Activated CD4-positive, alpha-beta memory T cell treated with anti-CD3 and anti-CD28 coated beads for 36 hours (primary cell): ENCODE measurements at regions of chr12 and their contacts with region 1.

Region 1: GRCh38 chr12:95858479-95859343 is at the start of gene SNRPF:
- DNase-seq: peak; percentile 97
- H3K4me3 Mint-ChIP-seq: no peak within 1 kb of the TSS
- H3K27ac Mint-ChIP-seq: no peak within 1 kb of the TSS
- H3K4me1 Mint-ChIP-seq: peaks cover 38% of the 10 kb centered on the region
- H3K27me3 Mint-ChIP-seq: peaks cover 5% of the 10 kb centered on the region
- total RNA-seq, gene SNRPF: 45.4 to 46.0 TPM

Region 2: DNA sequence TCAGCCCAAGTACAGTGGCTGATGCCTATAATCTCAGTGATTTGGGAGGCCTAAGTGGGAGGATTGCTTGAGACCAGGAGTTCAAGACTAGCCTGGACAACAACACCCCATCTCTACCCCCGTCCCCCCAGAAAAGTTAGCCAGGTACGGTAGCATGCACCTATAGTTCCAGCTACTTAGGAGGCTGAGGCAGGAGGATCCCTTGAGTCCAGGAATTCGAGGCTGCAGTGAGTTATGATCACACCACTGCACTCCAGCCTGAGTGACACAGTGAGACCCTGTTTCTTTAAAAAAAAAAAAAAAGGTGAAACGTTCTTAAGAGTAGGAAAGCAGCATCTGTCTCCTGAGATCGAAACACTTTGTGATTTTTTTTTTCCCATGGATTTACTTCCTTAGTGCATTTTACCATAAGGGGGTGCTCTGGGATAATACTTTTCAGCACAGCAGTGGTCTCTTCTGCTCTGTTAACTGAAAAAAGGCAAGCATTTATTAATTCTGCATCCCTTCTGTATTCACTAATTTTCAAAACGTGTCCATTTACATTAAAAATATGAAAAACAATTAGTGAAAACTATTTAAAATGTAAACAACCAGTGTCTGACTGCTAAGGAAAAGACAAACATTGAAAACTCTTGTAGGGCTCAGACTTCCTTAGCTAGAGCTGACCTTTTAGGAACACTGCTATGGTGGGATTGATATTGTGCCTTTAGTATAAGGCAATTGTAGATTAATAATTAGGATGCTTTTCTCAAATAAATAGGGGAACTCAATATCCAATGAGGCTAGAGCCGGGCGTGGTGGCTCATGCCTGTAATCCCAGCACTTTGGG is 276.3 kb before region 1 on chr12:
- CTCF ChIA-PET with region 1: no interaction called
- POLR2A ChIA-PET with region 1: no interaction called
- intact Hi-C with region 1: no loop called
- DNase-seq: no peak
- H3K4me3 Mint-ChIP-seq: no peak overlapping the region
- H3K27ac Mint-ChIP-seq: no peak overlapping the region
- H3K4me1 Mint-ChIP-seq: no peaks in the 10 kb centered on the region
- H3K27me3 Mint-ChIP-seq: peaks cover 6% of the 10 kb centered on the region

Region 3: GRCh38 chr12:95790033-95790911 is 68.4 kb before region 1 on chr12 and contains the start of gene NTN4:
- CTCF ChIA-PET with region 1: no interaction called
- POLR2A ChIA-PET with region 1: no interaction called
- intact Hi-C with region 1: no loop called
- DNase-seq: peak; percentile 39
- H3K4me3 Mint-ChIP-seq: peak within 1 kb of the TSS; percentile 64
- H3K27ac Mint-ChIP-seq: no peak within 1 kb of the TSS
- H3K4me1 Mint-ChIP-seq: peaks cover 16% of the 10 kb centered on the region
- H3K27me3 Mint-ChIP-seq: peaks cover 51% of the 10 kb centered on the region
- total RNA-seq, gene NTN4: 0.29 TPM in 1 of 2 experiments, not detected in the other

Region 4: GRCh38 chr12:96035278-96036236 is 176.8 kb after region 1 on chr12 and contains the start of gene LTA4H:
- CTCF ChIA-PET with region 1: no interaction called
- POLR2A ChIA-PET with region 1: no interaction called
- intact Hi-C with region 1: loop called (anchors 1 kb)
- DNase-seq: peak; percentile 97
- H3K4me3 Mint-ChIP-seq: no peak within 1 kb of the TSS
- H3K27ac Mint-ChIP-seq: no peak within 1 kb of the TSS
- H3K4me1 Mint-ChIP-seq: peaks cover 13% of the 10 kb centered on the region
- H3K27me3 Mint-ChIP-seq: no peaks in the 10 kb centered on the region
- total RNA-seq, gene LTA4H: 106 to 110 TPM